Activated B cell treated with CpG ODN at 0.5 μM for 24 hours (primary cell): ENCODE measurements at regions of chr14 and their contacts with region 1.

Region 1: GRCh38 chr14:105180592-105181548 is at the start of gene NUDT14:
- DNase-seq: peak; percentile 86
- ATAC-seq: peak; percentile 95
- H3K4me3 Mint-ChIP-seq: peak within 1 kb of the TSS; percentile 76
- H3K27ac Mint-ChIP-seq: no peak within 1 kb of the TSS
- H3K4me1 Mint-ChIP-seq: peaks cover 9% of the 10 kb centered on the region
- H3K27me3 Mint-ChIP-seq: peaks cover 5% of the 10 kb centered on the region
- CTCF ChIP-seq: no peak
- total RNA-seq, gene NUDT14: 15.1 and 15.2 TPM in 2 replicates

Region 2: GRCh38 chr14:105309371-105309770 is 128.5 kb after region 1 on chr14:
- CTCF ChIA-PET with region 1: no interaction called
- POLR2A ChIA-PET with region 1: interaction called, 13 read pairs
- intact Hi-C with region 1: loop called (anchors 5 kb)
- DNase-seq: no peak
- ATAC-seq: no peak
- H3K4me3 Mint-ChIP-seq: no peak overlapping the region
- H3K27ac Mint-ChIP-seq: no peak overlapping the region
- H3K4me1 Mint-ChIP-seq: peaks cover 8% of the 10 kb centered on the region
- H3K27me3 Mint-ChIP-seq: no peaks in the 10 kb centered on the region
- CTCF ChIP-seq: no peak

Region 3: DNA sequence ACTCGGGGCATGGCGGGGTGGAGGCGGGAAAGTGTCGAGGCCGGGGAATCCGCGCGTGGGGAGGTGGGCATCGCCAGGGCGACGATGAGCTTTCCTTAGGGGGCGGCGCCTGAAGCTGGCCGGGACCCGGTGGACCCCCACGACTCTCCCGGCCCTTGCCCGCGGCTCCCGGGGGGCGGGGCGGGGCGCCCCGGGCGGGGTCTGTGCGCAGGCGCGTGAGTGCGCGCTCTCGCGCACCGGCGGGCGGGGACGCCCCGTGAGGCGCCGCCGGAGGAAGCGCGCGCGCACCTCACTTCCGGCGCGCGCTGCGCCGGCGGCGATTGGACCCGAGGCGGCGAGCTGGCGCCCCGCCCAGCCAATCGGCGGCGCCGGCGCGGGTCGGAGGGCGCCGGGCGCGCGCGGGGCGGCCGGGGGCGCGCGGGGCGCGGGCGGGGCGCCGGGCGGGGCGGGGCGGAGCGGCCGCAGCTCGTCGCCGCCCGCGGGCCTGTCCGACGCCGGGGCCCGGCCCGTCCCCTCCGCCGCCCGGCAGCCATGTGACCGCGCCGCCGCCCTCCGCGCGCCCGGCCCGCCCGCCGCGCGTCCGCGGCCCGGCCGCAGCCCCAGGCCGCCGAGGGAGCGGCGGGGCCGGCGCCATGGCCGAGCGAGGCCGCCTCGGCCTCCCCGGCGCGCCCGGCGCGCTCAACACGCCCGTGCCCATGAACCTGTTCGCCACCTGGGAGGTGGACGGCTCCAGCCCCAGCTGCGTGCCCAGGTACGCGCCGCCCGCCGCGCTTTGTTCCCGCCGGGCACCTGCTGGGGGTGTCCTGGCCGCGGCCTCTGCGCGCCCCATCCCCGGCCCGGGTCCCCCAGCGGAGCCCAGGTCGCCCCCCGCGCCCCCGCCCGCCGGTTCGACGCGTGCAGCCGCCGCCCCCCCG is 133.7 kb after region 1 on chr14 and contains the start of gene PACS2:
- CTCF ChIA-PET with region 1: no interaction called
- POLR2A ChIA-PET with region 1: interaction called, 13 read pairs
- intact Hi-C with region 1: loop called (anchors 1 kb)
- DNase-seq: peak; percentile 86
- ATAC-seq: peak; percentile 86
- H3K4me3 Mint-ChIP-seq: peak within 1 kb of the TSS; percentile 86
- H3K27ac Mint-ChIP-seq: peak within 1 kb of the TSS; percentile 46
- H3K4me1 Mint-ChIP-seq: peaks cover 10% of the 10 kb centered on the region
- H3K27me3 Mint-ChIP-seq: no peaks in the 10 kb centered on the region
- CTCF ChIP-seq: no peak
- total RNA-seq, gene PACS2: 37.4 and 48.0 TPM in 2 replicates